ENCODE measurements at regions of chr2 and their contacts with region 1.

Region 1: DNA sequence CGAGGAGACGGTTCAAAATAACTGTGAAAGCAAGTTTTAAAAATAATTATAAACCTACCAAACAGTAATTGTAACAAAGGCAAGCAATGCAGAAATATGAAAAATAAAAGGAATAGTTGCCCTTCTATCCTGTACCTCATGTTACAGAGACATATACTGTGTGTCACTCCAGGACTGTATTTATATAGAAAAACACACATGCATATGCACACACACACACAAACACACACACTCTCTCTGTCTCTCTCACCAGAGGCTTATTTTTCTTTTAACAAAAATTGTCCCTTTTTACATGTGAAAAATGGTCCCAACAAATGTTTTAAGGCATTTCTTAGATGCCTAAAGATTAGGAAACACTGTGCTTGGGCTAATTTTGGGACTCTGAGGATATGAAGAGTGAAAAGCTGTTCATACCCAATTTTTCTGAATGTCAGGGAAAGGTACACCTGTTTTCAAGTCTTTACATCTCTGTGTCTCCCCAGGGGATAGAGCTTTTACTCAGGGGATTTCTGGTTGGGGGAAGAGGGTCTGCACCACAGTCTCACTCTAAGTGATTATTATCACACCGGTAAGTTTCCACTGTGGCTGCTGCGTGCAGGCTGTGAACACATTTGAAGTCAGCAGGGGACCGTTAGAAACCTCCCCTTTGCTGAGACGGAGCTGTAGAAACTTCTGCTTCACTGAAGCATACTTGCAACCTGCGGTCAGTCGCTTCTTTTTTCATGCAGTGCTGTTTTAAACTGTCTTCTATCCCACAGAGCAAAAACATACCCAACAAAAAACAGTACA is 51.4 kb upstream of the SPAG16 start:
- DNase-seq: peak; percentile 84
- ATAC-seq: peak; percentile 94
- H3K4me3 ChIP-seq: peak overlapping the region in 3 of 5 experiments; percentile 5 to 30 (median 21)
- H3K4me3 Mint-ChIP-seq: peak overlapping the region; percentile 71
- H3K27ac ChIP-seq: peak overlapping the region; percentile 64 to 75
- H3K27ac Mint-ChIP-seq: peak overlapping the region; percentile 73
- H3K4me1 ChIP-seq: peaks cover 34 to 60% of the 10 kb centered on the region in 2 donors
- H3K4me1 Mint-ChIP-seq: peaks cover 66% of the 10 kb centered on the region
- H3K27me3 ChIP-seq: no peaks in the 10 kb centered on the region
- H3K27me3 Mint-ChIP-seq: peaks cover 7% of the 10 kb centered on the region
- CTCF ChIP-seq: no peak

Region 2: DNA sequence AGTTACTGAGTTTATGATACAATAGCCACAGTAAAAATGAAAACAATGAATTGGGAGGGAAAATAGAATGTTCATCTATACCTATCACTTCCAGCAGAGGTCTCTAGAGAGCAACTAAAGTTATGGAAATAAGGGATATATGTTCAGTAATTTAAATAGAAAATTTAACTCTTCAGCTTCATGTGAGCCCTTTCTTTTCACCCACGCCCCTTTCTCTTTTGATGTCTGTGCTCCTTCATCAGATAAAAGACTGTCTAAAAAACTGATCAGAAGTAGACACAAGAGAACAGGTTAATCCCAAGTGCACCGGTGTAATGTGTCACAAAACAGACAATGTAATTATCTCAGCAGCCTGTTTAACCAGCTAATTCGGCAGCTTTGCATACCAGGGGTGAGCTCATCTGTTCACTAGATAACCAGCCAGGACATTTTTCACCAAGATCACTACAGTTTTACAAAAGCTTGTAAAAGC is 455.8 kb before region 1 on chr2:
- CTCF ChIA-PET with region 1: interaction called, 6 read pairs
- POLR2A ChIA-PET with region 1: no interaction called
- intact Hi-C with region 1: loop called (anchors 5 kb)
- DNase-seq: peak; percentile 52
- ATAC-seq: peak; percentile 54
- H3K4me3 ChIP-seq: no peak overlapping the region
- H3K4me3 Mint-ChIP-seq: no peak overlapping the region
- H3K27ac ChIP-seq: no peak overlapping the region
- H3K27ac Mint-ChIP-seq: no peak overlapping the region
- H3K4me1 ChIP-seq: no peaks in the 10 kb centered on the region
- H3K4me1 Mint-ChIP-seq: no peaks in the 10 kb centered on the region
- H3K27me3 ChIP-seq: no peaks in the 10 kb centered on the region
- H3K27me3 Mint-ChIP-seq: peaks cover 3% of the 10 kb centered on the region
- CTCF ChIP-seq: peak; percentile 84

Region 3: GRCh38 chr2:213151437-213152064 is 81.3 kb before region 1 on chr2 and contains the start of gene IKZF2:
- CTCF ChIA-PET with region 1: interaction called, 12 read pairs
- POLR2A ChIA-PET with region 1: interaction called, 5 read pairs
- intact Hi-C with region 1: loop called (anchors 1 kb)
- DNase-seq: peak; percentile 94
- ATAC-seq: peak; percentile 77
- H3K4me3 ChIP-seq: peak within 1 kb of the TSS; percentile 69 to 99 (median 80)
- H3K4me3 Mint-ChIP-seq: peak within 1 kb of the TSS; percentile 96
- H3K27ac ChIP-seq: peak within 1 kb of the TSS; percentile 91 to 93
- H3K27ac Mint-ChIP-seq: peak within 1 kb of the TSS; percentile 94
- H3K4me1 ChIP-seq: peaks cover 23 to 32% of the 10 kb centered on the region in 2 donors
- H3K4me1 Mint-ChIP-seq: peaks cover 55% of the 10 kb centered on the region
- H3K27me3 ChIP-seq: no peaks in the 10 kb centered on the region
- H3K27me3 Mint-ChIP-seq: no peaks in the 10 kb centered on the region
- CTCF ChIP-seq: no peak
- total RNA-seq, gene IKZF2: 49.1 and 49.3 TPM in 2 replicates

Region 4: GRCh38 chr2:213166109-213166508 is 66.7 kb before region 1 on chr2:
- CTCF ChIA-PET with region 1: interaction called, 5 read pairs
- POLR2A ChIA-PET with region 1: no interaction called
- intact Hi-C with region 1: loop called (anchors 2 kb)
- DNase-seq: peak; percentile 56
- ATAC-seq: peak; percentile 84
- H3K4me3 ChIP-seq: peak overlapping the region in 2 of 5 experiments; percentile 9 to 30
- H3K4me3 Mint-ChIP-seq: peak overlapping the region; percentile 48
- H3K27ac ChIP-seq: peak overlapping the region; percentile 81 to 94
- H3K27ac Mint-ChIP-seq: peak overlapping the region; percentile 82
- H3K4me1 ChIP-seq: peaks cover 17 to 38% of the 10 kb centered on the region in 2 donors
- H3K4me1 Mint-ChIP-seq: peaks cover 32% of the 10 kb centered on the region
- H3K27me3 ChIP-seq: no peaks in the 10 kb centered on the region
- H3K27me3 Mint-ChIP-seq: no peaks in the 10 kb centered on the region
- CTCF ChIP-seq: no peak

Region 5: GRCh38 chr2:213214209-213214608 is 18.6 kb before region 1 on chr2:
- CTCF ChIA-PET with region 1: no interaction called
- POLR2A ChIA-PET with region 1: no interaction called
- intact Hi-C with region 1: no loop called
- DNase-seq: no peak
- ATAC-seq: no peak
- H3K4me3 ChIP-seq: no peak overlapping the region
- H3K4me3 Mint-ChIP-seq: no peak overlapping the region
- H3K27ac ChIP-seq: no peak overlapping the region
- H3K27ac Mint-ChIP-seq: no peak overlapping the region
- H3K4me1 ChIP-seq: no peaks in the 10 kb centered on the region
- H3K4me1 Mint-ChIP-seq: no peaks in the 10 kb centered on the region
- H3K27me3 ChIP-seq: no peaks in the 10 kb centered on the region
- H3K27me3 Mint-ChIP-seq: no peaks in the 10 kb centered on the region
- CTCF ChIP-seq: no peak

Region 6: GRCh38 chr2:213284105-213285090 is 51.6 kb after region 1 on chr2 and contains the start of gene SPAG16:
- CTCF ChIA-PET with region 1: interaction called, 3 read pairs
- POLR2A ChIA-PET with region 1: no interaction called
- intact Hi-C with region 1: loop called (anchors 2 kb)
- DNase-seq: peak; percentile 95
- ATAC-seq: peak; percentile 95
- H3K4me3 ChIP-seq: peak within 1 kb of the TSS; percentile 69 to 95 (median 77)
- H3K4me3 Mint-ChIP-seq: peak within 1 kb of the TSS; percentile 100
- H3K27ac ChIP-seq: peak within 1 kb of the TSS; percentile 41 to 77
- H3K27ac Mint-ChIP-seq: peak within 1 kb of the TSS; percentile 94
- H3K4me1 ChIP-seq: peaks cover 11 to 13% of the 10 kb centered on the region in 2 donors
- H3K4me1 Mint-ChIP-seq: peaks cover 32% of the 10 kb centered on the region
- H3K27me3 ChIP-seq: no peaks in the 10 kb centered on the region
- H3K27me3 Mint-ChIP-seq: no peaks in the 10 kb centered on the region
- CTCF ChIP-seq: no peak
- total RNA-seq, gene SPAG16: 8.6 and 9.5 TPM in 2 replicates

Region 7: GRCh38 chr2:213723041-213723560 is 490.3 kb after region 1 on chr2:
- CTCF ChIA-PET with region 1: no interaction called
- POLR2A ChIA-PET with region 1: no interaction called
- intact Hi-C with region 1: no loop called
- DNase-seq: no peak
- ATAC-seq: no peak
- H3K4me3 ChIP-seq: no peak overlapping the region
- H3K4me3 Mint-ChIP-seq: no peak overlapping the region
- H3K27ac ChIP-seq: no peak overlapping the region
- H3K27ac Mint-ChIP-seq: no peak overlapping the region
- H3K4me1 ChIP-seq: no peaks in the 10 kb centered on the region
- H3K4me1 Mint-ChIP-seq: no peaks in the 10 kb centered on the region
- H3K27me3 ChIP-seq: no peaks in the 10 kb centered on the region
- H3K27me3 Mint-ChIP-seq: no peaks in the 10 kb centered on the region
- CTCF ChIP-seq: no peak